Gastrocnemius medialis (tissue), 4 donors: ENCODE measurements at regions of chr10 and their contacts with region 1.

Region 1: DNA sequence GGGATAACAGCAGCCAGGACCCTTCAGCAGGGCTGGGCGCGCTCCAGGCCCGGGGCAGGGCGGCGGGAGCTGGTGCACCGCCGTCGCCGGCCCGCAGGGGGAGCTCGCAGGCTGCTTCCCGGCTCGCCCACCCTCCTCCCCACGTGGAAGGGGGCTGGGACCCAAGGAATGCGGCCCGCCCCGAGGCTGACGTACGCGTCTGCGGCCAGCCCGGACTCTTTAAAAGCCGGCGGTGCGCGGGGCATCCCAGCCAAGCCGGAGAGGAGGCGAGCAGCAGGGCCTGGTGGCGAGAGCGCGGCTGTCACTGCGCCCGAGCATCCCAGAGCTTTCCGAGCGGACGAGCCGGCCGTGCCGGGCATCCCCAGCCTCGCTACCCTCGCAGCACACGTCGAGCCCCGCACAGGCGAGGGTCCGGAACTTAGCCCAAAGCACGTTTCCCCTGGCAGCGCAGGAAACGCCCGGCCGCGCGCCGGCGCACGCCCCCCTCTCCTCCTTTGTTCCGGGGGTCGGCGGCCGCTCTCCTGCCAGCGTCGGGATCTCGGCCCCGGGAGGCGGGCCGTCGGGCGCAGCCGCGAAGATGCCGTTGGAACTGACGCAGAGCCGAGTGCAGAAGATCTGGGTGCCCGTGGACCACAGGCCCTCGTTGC is at the start of gene PFKFB3:
- DNase-seq: peak; percentile 94 to 95
- ATAC-seq: peak; percentile 30 to 41
- H3K4me3 ChIP-seq: peak within 1 kb of the TSS; percentile 67 to 100 (median 90)
- H3K27ac ChIP-seq: peak within 1 kb of the TSS; percentile 89 to 98 (median 95)
- H3K4me1 ChIP-seq: peaks cover 44 to 46% of the 10 kb centered on the region in 2 donors
- H3K27me3 ChIP-seq: no peaks in the 10 kb centered on the region
- CTCF ChIP-seq: peak; percentile 94 to 100 (median 99)
- POLR2A ChIP-seq: peak; percentile 99 to 100
- total RNA-seq, gene PFKFB3: 218 to 1,159 (median 337) TPM

Region 2: DNA sequence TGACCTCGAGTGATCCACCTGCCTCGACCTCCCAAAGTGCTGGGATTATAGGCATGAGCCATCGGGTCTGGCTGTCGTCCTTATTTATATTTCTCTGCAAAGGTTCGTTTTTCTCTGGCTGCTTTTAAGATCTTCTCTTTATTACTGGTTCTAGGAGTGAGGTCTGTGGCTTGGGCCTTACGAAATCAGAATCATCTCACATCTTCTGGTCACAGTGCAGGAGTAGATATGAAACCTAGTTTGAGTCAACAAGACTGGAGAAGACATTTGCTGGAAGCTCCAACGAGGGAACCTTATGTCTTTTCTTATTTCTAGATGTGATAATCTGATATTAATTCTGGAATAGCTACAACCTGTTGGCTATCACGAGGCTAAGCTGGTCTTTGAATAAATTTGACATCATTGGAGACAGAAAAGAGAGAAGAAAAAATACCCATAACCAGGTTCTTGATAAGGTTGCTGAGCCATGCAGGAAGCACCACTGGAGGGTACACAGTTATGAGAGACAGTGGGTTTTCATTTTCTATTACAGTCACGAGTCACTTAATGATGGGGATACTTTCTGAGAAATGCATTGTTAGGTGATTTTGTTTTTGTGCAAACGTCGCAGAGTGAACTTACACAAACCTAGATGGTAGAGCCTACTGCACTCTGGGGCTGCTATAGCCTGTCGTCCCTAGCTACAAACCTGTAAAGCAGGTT is 199.8 kb before region 1 on chr10:
- in situ Hi-C with region 1: no loop called
- intact Hi-C with region 1: no loop called
- DNase-seq: no peak
- ATAC-seq: no peak
- H3K4me3 ChIP-seq: no peak overlapping the region
- H3K27ac ChIP-seq: no peak overlapping the region
- H3K4me1 ChIP-seq: no peaks in the 10 kb centered on the region
- H3K27me3 ChIP-seq: no peaks in the 10 kb centered on the region
- CTCF ChIP-seq: no peak
- POLR2A ChIP-seq: no peak

Region 3: GRCh38 chr10:6088721-6089390 is 114.0 kb before region 1 on chr10 and contains the start of gene RBM17:
- in situ Hi-C with region 1: no loop called
- intact Hi-C with region 1: loop called (anchors 1 kb)
- DNase-seq: peak; percentile 92 to 96
- ATAC-seq: peak; percentile 86 to 91
- H3K4me3 ChIP-seq: peak within 1 kb of the TSS; percentile 83 to 94 (median 88)
- H3K27ac ChIP-seq: peak within 1 kb of the TSS; percentile 78 to 96 (median 82)
- H3K4me1 ChIP-seq: peaks cover 39 to 48% of the 10 kb centered on the region in 2 donors
- H3K27me3 ChIP-seq: peaks cover 0 to 5% (median 0%) of the 10 kb centered on the region in 3 donors
- CTCF ChIP-seq: peak; percentile 99 to 100 (median 100)
- POLR2A ChIP-seq: peak; percentile 83 to 87
- total RNA-seq, gene RBM17: 53.2 to 67.4 (median 60.1) TPM

Region 4: DNA sequence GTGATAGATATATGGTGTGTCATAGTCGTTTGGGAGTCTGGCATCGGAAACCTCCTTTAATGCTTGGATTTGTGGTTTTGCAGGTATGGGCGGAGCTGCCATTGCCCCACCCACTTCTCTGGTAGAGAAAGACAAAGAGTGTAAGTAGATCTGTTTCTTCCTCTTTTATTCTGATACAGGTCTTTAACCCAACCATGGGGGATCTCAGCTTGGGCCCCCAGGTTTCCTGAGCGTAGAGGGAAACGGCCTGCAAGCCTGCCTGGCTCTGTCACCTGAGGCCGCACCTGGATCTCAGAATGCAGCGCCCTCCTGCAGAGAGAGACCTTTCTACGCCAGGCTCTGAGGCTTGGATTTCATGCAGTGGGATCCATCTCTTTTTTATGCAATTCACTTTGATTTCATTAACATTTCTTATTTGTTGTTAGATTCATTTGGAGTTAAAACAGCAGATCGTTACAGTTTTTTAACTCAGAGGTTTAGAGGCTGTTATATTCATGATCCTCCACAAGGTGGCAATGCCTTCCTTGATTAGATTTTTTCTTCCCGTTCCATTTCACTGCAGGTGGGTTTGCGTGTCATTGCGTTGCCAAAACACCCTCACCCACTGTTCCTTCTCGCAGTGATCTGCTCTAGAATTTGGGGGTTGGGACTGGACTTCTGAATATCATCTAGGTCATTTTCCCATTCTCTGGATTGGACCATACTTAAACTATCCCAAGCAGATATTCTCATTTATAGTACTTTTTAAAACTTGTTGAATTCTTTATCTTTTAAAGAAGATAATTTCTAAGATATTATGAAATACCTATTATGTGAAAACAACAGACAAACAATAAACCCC is 94.0 kb before region 1 on chr10:
- in situ Hi-C with region 1: loop called in 2 of 4 experiments (anchors 10 kb)
- intact Hi-C with region 1: loop called (anchors 2 kb)
- DNase-seq: no peak
- ATAC-seq: peak in 1 of 2 donors; percentile 23
- H3K4me3 ChIP-seq: no peak overlapping the region
- H3K27ac ChIP-seq: peak overlapping the region; percentile 12 to 41 (median 35)
- H3K4me1 ChIP-seq: peaks cover 8 to 19% of the 10 kb centered on the region in 2 donors
- H3K27me3 ChIP-seq: no peaks in the 10 kb centered on the region
- CTCF ChIP-seq: peak; percentile 75 to 82 (median 77)
- POLR2A ChIP-seq: no peak

Region 5: DNA sequence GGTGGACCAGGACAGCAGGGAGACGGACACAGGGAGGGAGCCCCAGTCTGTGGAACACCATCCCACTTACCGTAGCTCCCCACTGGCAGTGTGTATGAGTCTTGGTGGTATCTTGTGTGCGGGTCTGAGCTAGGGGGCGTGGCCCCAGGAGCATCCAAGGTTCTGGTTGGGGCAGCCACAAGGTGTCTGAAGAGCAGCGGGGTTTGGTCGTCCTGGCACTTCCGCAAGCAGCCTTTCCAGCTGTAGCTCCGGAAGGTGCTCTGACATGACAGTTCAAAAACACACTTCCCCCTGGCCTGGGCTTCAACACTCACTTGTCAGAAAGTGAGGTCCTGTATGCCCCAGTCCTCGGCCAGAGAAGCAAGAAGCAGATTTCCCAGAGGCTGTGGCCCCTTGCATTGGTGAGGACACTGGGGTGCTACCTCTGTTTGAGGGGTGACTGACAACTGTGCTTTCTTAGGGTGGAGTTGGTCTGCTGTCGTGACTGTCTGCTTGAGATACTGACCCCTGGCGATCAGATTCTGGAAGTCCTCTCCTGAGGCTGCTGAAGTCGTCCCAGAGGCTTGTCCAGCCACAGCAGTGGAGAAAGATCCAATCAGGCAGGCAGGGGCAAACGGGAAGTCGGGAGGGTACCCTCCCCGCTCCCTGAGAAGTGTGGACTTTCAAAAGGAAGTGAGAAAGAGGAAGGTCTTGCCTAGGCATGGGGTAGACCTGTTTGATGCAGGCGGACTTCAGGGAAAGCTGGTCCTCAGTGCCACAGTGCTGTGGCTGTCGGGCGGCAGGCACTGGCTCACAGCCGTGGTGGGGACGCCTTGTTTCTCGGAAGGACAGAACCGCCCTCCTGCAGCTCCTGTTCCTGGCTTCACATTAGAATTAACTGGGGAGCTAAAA is 51.5 kb before region 1 on chr10:
- in situ Hi-C with region 1: loop called in 1 of 4 experiments (anchors 10 kb)
- intact Hi-C with region 1: no loop called
- DNase-seq: peak in 1 of 2 donors; percentile 63
- ATAC-seq: peak; percentile 43 to 82
- H3K4me3 ChIP-seq: peak overlapping the region in 1 of 4 donors; percentile 15
- H3K27ac ChIP-seq: peak overlapping the region; percentile 24 to 58 (median 54)
- H3K4me1 ChIP-seq: peaks cover 27 to 39% of the 10 kb centered on the region in 2 donors
- H3K27me3 ChIP-seq: no peaks in the 10 kb centered on the region
- CTCF ChIP-seq: peak; percentile 31 to 66 (median 51)
- POLR2A ChIP-seq: no peak

Region 6: GRCh38 chr10:6163364-6164270 is 39.2 kb before region 1 on chr10:
- in situ Hi-C with region 1: loop called in 2 of 4 experiments (anchors 5 to 10 kb)
- intact Hi-C with region 1: loop called (anchors 1 kb)
- DNase-seq: peak; percentile 91 to 96
- ATAC-seq: peak; percentile 80 to 86
- H3K4me3 ChIP-seq: peak overlapping the region; percentile 67 to 79 (median 76)
- H3K27ac ChIP-seq: peak overlapping the region; percentile 96 to 99 (median 99)
- H3K4me1 ChIP-seq: peaks cover 38 to 62% of the 10 kb centered on the region in 2 donors
- H3K27me3 ChIP-seq: no peaks in the 10 kb centered on the region
- CTCF ChIP-seq: peak in 2 of 5 experiments; percentile 30 to 31
- POLR2A ChIP-seq: peak; percentile 83 to 90

Region 7: GRCh38 chr10:6175329-6176055 is 27.3 kb before region 1 on chr10:
- in situ Hi-C with region 1: no loop called
- intact Hi-C with region 1: loop called (anchors 2 kb)
- DNase-seq: peak; percentile 90
- ATAC-seq: peak; percentile 33 to 38
- H3K4me3 ChIP-seq: peak overlapping the region in 2 of 4 donors; percentile 17 to 48
- H3K27ac ChIP-seq: peak overlapping the region; percentile 96 to 99 (median 99)
- H3K4me1 ChIP-seq: peaks cover 83 to 87% of the 10 kb centered on the region in 2 donors
- H3K27me3 ChIP-seq: no peaks in the 10 kb centered on the region
- CTCF ChIP-seq: no peak
- POLR2A ChIP-seq: peak; percentile 38 to 64

Region 8: DNA sequence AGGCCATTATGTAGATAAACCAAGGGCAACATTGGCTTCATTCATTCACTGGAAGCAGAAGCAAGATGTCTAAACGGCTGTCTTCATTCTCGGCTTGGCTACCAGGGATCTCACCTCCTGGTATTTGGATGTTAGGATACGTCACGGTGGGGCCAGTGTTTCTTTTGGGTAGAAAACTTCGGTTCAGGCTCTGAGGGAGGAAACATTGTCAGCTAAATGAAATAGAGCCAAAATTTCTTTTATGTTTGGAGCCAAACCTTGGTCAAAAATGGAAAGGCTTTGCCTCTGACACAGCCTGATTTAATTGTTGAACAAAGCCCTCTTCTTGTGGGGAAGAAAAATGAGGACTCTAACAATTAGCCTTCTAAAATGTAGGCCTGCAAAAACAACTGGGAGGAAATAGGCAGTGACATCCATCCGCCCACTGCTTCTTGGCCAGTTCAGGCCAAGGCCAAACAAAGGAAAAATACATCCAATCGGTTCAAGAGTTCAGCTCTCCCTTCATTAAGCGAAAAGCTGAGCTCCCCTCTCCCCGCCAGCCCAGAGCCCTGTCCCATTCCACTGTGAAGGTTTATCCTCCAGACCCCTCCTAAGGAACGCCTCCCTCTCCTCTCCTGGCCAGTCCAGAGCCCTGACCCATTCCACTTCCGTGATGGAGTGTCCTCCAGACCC is 44.4 kb after region 1 on chr10:
- in situ Hi-C with region 1: no loop called
- intact Hi-C with region 1: no loop called
- DNase-seq: no peak
- ATAC-seq: no peak
- H3K4me3 ChIP-seq: no peak overlapping the region
- H3K27ac ChIP-seq: no peak overlapping the region
- H3K4me1 ChIP-seq: no peaks in the 10 kb centered on the region
- H3K27me3 ChIP-seq: no peaks in the 10 kb centered on the region
- CTCF ChIP-seq: no peak
- POLR2A ChIP-seq: no peak